Aorta (tissue), 5 donors: ENCODE measurements at regions of chr12 and their contacts with region 1.

Region 1: DNA sequence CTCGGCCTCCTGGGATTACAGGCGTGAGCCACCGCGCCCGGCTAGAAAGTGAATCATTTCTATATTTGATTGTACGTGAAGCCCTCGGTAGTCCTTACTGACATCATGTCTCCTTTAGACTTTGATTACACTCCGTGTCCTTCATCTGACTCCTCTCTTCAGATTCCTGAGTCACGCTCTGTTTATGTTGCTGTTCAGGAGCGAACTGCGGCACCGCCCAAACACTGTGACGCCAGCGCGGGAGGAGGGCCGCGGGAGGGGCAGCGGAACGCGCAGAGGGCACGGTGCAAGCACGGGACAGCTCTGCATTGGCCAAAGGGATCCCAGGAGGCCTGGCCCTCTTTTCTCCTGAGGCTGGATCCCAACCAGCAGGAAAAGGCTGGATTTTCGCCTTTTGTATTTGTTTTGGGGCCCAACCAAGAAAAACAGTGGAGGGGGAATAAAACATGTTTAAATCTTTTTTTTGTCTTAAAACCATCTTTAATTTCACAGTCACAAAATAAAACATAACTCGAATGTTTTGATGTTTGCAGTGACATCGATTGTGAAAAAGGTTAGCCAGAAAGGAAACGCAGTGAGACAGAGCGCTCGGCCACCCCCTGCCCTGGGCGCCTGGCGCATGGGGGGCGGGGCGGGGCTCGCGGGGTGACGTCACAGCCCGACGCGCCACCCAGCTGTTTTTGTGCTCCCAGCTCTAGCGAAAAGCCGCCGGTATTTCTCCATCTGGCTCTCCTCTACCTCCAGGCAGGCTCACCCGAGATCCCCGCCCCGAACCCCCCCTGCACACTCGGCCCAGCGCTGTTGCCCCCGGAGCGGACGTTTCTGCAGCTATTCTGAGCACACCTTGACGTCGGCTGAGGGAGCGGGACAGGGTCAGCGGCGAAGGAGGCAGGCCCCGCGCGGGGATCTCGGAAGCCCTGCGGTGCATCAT is at the start of gene GABARAPL1:
- DNase-seq: peak; percentile 98 to 99
- ATAC-seq: peak; percentile 96
- H3K4me3 ChIP-seq: peak within 1 kb of the TSS; percentile 55 to 97
- H3K27ac ChIP-seq: peak within 1 kb of the TSS; percentile 88 to 99
- H3K4me1 ChIP-seq: no peaks in the 10 kb centered on the region
- H3K27me3 ChIP-seq: no peaks in the 10 kb centered on the region
- total RNA-seq, gene GABARAPL1: 103 to 111 TPM

Region 2: DNA sequence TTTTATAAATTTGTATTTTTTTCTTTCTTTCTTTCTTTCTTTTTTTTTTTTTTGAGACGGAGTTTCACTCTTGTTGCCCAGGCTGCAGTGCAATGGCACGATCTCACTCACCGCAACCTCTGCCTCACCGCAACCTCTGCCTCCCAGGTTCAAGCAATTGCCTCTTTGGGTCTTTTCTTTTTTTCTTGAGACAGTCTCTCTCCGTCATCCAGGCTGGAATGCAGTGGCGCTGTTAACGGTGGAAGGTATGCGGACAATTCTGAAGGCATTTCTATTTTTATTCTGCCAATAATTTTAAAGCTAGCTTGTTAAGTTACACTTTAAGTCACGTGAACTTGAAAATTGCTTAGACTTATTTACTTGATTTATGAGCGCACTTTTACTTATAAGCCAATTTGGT is 1306.9 kb before region 1 on chr12:
- intact Hi-C with region 1: loop called in 1 of 2 experiments (anchors 10 kb)
- DNase-seq: no peak
- ATAC-seq: no peak
- H3K4me3 ChIP-seq: no peak overlapping the region
- H3K27ac ChIP-seq: no peak overlapping the region
- H3K4me1 ChIP-seq: no peaks in the 10 kb centered on the region
- H3K27me3 ChIP-seq: no peaks in the 10 kb centered on the region

Region 3: DNA sequence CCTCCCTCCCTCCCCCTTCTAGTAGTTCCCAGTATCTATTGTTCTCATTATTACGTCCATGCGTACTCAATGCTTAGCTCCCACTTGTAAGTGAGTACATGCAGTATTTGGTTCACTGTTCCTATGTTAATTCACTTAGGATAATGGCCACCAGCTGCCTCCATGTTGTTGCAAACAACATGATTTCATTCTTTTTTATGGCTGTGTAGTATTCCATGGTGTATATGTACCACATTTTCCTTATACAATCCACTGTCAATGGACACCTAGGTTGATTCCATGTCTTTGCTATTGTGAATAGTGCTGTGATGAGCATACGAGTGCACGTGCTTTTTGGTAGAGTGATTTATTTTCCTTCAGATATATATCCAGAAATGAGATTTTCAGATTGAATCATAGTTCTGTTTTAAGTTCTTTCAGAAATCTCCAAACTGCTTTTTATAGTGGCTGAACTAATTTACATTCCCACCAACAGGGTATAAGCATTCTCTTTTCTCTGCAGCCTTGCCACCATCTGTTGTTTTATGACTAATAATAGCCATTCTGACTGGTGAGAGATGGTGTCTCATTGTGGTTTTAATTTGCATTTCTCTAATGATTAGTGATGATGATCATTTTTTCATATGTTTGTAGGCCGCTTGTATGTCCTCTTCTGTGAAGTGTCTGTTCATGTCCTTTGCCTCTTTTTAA is 64.6 kb before region 1 on chr12:
- intact Hi-C with region 1: no loop called
- DNase-seq: no peak
- ATAC-seq: no peak
- H3K4me3 ChIP-seq: no peak overlapping the region
- H3K27ac ChIP-seq: no peak overlapping the region
- H3K4me1 ChIP-seq: no peaks in the 10 kb centered on the region
- H3K27me3 ChIP-seq: no peaks in the 10 kb centered on the region

Region 4: GRCh38 chr12:10235761-10236631 is 23.5 kb after region 1 on chr12:
- intact Hi-C with region 1: no loop called
- DNase-seq: no peak
- ATAC-seq: peak; percentile 89
- H3K4me3 ChIP-seq: no peak overlapping the region
- H3K27ac ChIP-seq: no peak overlapping the region
- H3K4me1 ChIP-seq: no peaks in the 10 kb centered on the region
- H3K27me3 ChIP-seq: no peaks in the 10 kb centered on the region

Region 5: DNA sequence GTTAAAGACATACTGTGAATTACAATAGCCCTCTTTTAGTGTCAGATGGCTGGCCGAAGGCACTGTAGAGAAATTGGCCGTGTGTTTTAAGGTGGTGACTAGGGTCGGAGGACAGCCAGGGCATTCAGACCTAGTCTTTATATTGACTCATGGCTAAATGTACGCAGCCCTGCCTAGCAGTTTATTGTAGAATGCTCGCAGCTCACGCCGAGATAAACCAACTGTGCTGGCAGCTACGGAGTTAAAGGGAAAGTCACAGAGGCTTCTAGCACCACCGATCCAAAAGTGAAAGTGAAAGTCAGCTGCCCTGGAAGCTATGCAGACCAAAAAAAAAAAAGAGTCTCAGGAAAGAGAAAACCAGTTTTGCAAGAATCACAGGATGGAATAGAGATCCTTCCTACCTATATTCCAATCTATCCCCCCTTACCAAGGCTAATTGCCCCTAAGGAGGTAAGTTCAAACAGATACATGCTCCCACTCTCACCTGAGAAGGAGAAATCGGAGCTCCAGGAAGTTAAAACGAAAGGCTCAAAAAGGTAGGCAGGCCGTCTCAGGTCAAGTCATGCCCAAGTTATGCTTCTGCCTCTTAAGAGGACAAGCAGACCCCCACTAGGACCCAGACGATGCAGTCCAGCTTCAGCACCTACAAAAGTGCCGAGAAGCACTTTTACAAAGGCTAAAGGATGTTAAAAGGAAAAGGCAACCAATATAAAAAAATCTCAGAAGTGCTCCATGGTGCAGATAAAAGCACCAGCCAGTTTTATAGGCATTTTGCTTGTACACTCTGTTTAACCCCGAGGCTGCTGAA is 152.6 kb after region 1 on chr12:
- intact Hi-C with region 1: loop called in 1 of 2 experiments (anchors 10 kb)
- DNase-seq: peak in 1 of 2 donors; percentile 62
- ATAC-seq: peak; percentile 91
- H3K4me3 ChIP-seq: peak overlapping the region; percentile 95 to 99
- H3K27ac ChIP-seq: peak overlapping the region; percentile 87 to 95
- H3K4me1 ChIP-seq: no peaks in the 10 kb centered on the region
- H3K27me3 ChIP-seq: no peaks in the 10 kb centered on the region

Region 6: GRCh38 chr12:10716704-10717315 is 504.3 kb after region 1 on chr12:
- intact Hi-C with region 1: loop called (anchors 2 to 10 kb)
- DNase-seq: peak; percentile 88 to 91
- ATAC-seq: peak; percentile 87
- H3K4me3 ChIP-seq: no peak overlapping the region
- H3K27ac ChIP-seq: peak overlapping the region in 1 of 2 donors; percentile 56
- H3K4me1 ChIP-seq: peaks cover 2 to 6% of the 10 kb centered on the region in 2 donors
- H3K27me3 ChIP-seq: no peaks in the 10 kb centered on the region

Region 7: GRCh38 chr12:10721651-10722501 is 509.4 kb after region 1 on chr12:
- intact Hi-C with region 1: loop called (anchors 2 to 10 kb)
- DNase-seq: peak; percentile 96
- ATAC-seq: peak; percentile 94
- H3K4me3 ChIP-seq: peak overlapping the region; percentile 96 to 100
- H3K27ac ChIP-seq: peak overlapping the region; percentile 98 to 99
- H3K4me1 ChIP-seq: peaks cover 2 to 6% of the 10 kb centered on the region in 2 donors
- H3K27me3 ChIP-seq: peaks cover 0 to 1% of the 10 kb centered on the region in 2 donors